GM12878 (cell line): ENCODE measurements at regions of chr9 and their contacts with region 1.

Region 1: GRCh38 chr9:22528485-22528884 is 81.9 kb downstream of the DMRTA1 start:
- DNase-seq: no peak
- ATAC-seq: peak; percentile 53; the same call in 2 of the 3 replicates
- H3K4me3 ChIP-seq: no peak overlapping the region
- H3K27ac ChIP-seq: no peak overlapping the region
- H3K4me1 ChIP-seq: no peaks in the 10 kb centered on the region
- H3K27me3 ChIP-seq: no peaks in the 10 kb centered on the region
- CTCF ChIP-seq: peak in 1 of 3 experiments; percentile 4; a peak in 2 of 6 replicates
- EP300 ChIP-seq: no peak
- POLR2A ChIP-seq: no peak
- RAD21 ChIP-seq: no peak

Region 2: DNA sequence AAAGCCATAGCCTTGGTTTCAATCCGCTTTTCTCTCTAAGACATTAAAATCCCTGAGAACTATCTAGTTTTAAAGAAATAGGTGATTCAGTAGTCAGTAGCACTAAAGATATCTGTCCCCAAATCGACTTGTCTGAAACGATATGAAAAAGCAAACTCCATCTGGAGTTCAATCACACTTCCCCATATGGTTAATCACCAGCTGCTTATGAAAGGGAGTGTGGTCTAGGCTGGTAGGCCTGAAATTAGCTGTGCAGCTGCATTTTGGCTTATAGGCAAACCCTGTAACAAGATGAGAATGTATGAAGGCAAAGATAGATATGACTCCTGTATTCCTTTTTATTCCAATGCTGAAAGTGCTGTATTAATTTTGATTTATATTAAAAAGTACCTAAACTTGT is 16.0 kb before region 1 on chr9:
- CTCF ChIA-PET with region 1: interaction called, 7 read pairs
- POLR2A ChIA-PET with region 1: no interaction called
- RAD21 ChIA-PET with region 1: interaction called, 13 read pairs
- SMC1A ChIA-PET with region 1: interaction called, 22 read pairs
- in situ Hi-C with region 1: no loop called
- intact Hi-C with region 1: no loop called
- DNase-seq: no peak
- ATAC-seq: peak; percentile 95
- H3K4me3 ChIP-seq: no peak overlapping the region
- H3K27ac ChIP-seq: no peak overlapping the region
- H3K4me1 ChIP-seq: no peaks in the 10 kb centered on the region
- H3K27me3 ChIP-seq: no peaks in the 10 kb centered on the region
- CTCF ChIP-seq: no peak
- EP300 ChIP-seq: no peak
- POLR2A ChIP-seq: no peak
- RAD21 ChIP-seq: no peak

Region 3: GRCh38 chr9:22992781-22993180 is 464.3 kb after region 1 on chr9:
- CTCF ChIA-PET with region 1: no interaction called
- POLR2A ChIA-PET with region 1: no interaction called
- RAD21 ChIA-PET with region 1: no interaction called
- SMC1A ChIA-PET with region 1: no interaction called
- in situ Hi-C with region 1: no loop called
- intact Hi-C with region 1: no loop called
- DNase-seq: no peak
- ATAC-seq: no peak
- H3K4me3 ChIP-seq: no peak overlapping the region
- H3K27ac ChIP-seq: no peak overlapping the region
- H3K4me1 ChIP-seq: no peaks in the 10 kb centered on the region
- H3K27me3 ChIP-seq: no peaks in the 10 kb centered on the region
- CTCF ChIP-seq: no peak
- EP300 ChIP-seq: no peak
- POLR2A ChIP-seq: no peak
- RAD21 ChIP-seq: no peak